ENCODE measurements at regions of chr16 and their contacts with region 1.

Region 1: DNA sequence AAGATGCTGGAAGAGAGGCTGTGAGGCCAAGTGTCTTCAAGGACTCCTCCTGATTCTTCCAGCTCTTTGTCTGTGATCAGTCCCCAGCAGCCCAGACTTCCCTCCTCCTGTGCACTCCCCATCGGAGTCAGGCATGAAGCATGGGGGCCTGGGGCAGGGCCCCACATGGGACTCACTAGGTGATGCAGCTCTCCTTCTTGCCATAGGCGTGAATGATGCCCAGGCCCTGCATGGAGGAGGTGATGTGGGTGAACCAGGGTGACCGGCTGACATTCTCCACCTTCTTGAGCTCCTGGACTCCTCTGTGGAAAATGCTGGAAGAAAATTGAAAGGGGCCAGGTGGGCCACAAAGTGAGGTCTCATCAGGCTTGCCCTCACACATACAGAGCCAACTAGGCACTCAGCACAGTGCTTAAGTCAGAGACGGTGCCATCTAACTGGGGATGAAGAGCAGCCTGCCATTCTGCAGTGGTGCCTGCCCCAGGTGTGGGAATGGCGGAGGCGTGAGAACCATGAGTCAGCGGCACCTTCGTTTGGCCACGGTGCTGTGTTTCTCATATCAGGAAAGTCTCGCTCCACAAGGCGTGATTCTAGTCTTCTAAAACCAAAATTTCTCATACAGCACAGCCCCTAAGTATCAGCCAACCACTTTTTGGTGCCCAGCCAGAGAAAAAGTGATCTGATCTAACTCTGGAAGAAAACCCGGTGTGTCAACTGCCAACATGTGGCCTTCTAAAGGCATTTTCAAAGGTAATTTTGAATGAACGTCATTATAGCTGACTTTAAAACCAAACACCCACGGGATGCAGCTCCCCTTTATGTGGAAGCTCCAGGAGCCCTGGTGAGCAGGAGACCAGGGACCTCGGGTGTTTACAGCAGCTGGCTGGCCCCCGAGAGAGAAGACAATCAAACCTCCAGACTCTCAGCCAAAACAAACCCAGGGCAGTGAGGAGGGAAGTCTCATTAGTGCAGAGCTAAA is 54.8 kb downstream of the ABCC12 start:
- DNase-seq: peak; percentile 76
- CTCF ChIP-seq: no peak

Region 2: DNA sequence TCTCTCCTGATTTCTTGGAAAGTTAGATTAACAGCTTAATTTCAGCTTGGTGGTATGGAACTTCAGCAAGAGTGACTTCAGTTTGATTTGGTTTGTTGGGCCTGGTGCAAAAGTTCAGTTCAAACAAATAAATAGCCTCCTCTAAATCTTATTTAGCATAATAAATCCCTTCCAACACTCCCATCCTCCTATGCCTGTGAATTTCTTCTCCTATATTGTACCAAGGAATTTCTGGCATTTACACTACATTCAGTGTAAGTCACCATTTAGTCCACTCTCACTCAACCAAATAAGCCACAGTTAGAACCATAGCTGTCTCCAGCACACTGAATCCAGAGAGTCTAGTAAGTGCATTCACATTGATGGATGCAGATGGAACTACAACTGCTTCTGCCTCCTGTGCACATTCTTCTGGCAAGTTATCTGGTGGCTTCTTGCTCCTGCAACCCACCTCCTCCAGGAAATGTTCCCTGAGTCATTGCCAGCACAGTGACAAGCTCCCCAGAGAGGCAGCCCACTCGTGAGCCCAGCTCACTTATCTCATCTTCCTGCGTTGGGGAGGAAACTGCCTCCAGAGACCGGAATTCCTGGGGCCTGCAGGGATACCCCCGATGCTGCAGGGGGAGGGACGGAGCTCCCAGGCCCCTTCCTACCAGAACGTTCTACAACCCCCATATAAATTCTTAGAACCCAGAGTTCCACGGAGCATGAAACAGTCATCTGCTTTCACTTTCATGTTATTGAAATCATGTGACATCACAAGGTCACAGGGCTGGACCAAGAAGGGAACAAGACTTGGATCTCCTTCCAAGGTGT is 321.6 kb before region 1 on chr16:
- CTCF ChIA-PET with region 1: no interaction called
- POLR2A ChIA-PET with region 1: no interaction called
- DNase-seq: peak; percentile 34
- CTCF ChIP-seq: no peak

Region 3: GRCh38 chr16:48117217-48118105 is 16.5 kb after region 1 on chr16:
- CTCF ChIA-PET with region 1: interaction called, 14 read pairs
- POLR2A ChIA-PET with region 1: no interaction called
- DNase-seq: peak; percentile 85
- CTCF ChIP-seq: peak; percentile 81